Lower leg skin (tissue), 4 donors: ENCODE measurements at regions of chr12 and their contacts with region 1.

Region 1: DNA sequence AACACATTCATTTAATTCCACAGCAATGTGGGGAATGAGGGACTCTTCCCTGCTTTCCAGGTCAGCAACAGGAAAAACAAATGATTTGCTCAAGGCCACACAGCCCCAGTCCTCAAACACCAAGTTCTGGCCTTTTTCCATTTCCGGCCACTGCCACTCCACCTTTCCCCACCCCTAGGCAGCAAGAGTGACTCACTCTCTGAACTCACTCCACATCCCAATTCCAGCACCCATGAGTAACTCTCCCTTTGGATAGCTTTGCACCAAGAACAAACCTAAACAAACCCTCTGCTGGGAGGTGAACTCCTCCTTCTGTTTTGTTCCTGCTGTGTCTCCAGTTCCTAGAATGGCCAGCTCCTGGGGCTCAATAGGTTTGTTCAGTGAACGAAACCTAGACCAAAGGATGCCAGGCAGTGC is 30.4 kb upstream of the PLEKHG6 start:
- DNase-seq: peak; percentile 70 to 94
- H3K4me3 ChIP-seq: no peak overlapping the region
- CTCF ChIP-seq: no peak
- POLR2A ChIP-seq: no peak

Region 2: DNA sequence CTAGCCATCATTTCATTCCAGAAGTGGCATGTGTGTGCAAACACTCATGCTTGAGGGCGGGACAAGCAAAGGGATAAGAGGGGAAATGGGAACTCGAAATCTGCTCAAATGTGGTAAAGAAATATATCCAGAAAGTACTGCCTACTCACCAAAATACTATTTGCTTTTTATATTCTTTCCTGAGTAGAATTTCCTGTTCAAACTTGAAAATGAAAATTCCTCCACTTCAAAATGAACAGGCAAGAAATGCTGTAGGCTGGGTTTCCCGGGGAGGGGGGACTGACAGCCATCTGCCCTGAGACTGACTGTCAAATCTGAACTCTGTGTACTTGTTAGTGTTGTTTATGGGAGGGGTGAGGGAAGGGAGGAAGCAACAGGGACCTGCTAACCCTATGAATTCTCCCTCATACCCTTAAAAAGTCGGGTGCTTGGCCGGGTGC is 813.5 kb before region 1 on chr12:
- intact Hi-C with region 1: loop called (anchors 5 kb)
- DNase-seq: no peak
- H3K4me3 ChIP-seq: no peak overlapping the region
- CTCF ChIP-seq: no peak
- POLR2A ChIP-seq: no peak

Region 3: GRCh38 chr12:6062757-6063735 is 217.0 kb before region 1 on chr12:
- intact Hi-C with region 1: loop called (anchors 5 kb)
- DNase-seq: no peak
- H3K4me3 ChIP-seq: no peak overlapping the region
- CTCF ChIP-seq: peak in 1 of 3 donors; percentile 92
- POLR2A ChIP-seq: no peak